ENCODE measurements at regions of chr1 and their contacts with region 1.

Region 1: DNA sequence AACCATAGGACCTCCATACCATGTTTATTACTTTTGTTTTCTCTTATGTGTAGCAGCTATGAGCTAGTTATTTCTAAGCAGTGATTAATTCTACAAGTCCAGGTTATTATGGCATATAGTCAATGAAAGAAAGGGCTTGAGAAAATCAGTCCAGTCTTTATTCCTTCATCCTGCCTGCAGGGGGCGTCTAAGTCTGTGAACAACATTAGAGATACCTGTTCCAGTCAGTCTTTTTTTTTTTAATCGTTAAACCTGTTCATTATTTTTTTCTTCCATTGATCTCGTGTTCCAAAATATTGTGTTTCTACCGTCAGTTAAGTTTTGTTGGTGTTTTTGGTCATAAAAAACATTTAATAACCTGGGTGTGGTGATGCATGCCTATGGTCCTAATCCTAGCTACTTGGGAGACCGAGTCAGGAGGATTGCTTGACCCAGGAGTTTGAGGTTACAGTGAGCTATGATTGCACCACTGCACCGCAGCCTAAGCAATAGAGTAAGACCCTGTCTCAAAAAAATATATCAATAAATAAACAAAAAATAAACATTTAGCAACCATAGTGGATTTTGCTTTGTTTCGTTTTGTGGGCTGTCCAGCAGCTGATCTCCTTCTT is 29.4 kb upstream of the CD2 start:
- DNase-seq: peak; percentile 89
- ATAC-seq: peak; percentile 83
- H3K4me3 Mint-ChIP-seq: no peak overlapping the region
- H3K27ac Mint-ChIP-seq: no peak overlapping the region
- H3K4me1 Mint-ChIP-seq: peaks cover 33% of the 10 kb centered on the region
- H3K27me3 Mint-ChIP-seq: no peaks in the 10 kb centered on the region

Region 2: GRCh38 chr1:116661633-116662032 is 63.2 kb before region 1 on chr1:
- CTCF ChIA-PET with region 1: no interaction called
- POLR2A ChIA-PET with region 1: no interaction called
- DNase-seq: no peak
- ATAC-seq: no peak
- H3K4me3 Mint-ChIP-seq: no peak overlapping the region
- H3K27ac Mint-ChIP-seq: no peak overlapping the region
- H3K4me1 Mint-ChIP-seq: peaks cover 20% of the 10 kb centered on the region
- H3K27me3 Mint-ChIP-seq: peaks cover 45% of the 10 kb centered on the region

Region 3: GRCh38 chr1:116697548-116698243 is 27.2 kb before region 1 on chr1:
- CTCF ChIA-PET with region 1: no interaction called
- POLR2A ChIA-PET with region 1: no interaction called
- DNase-seq: no peak
- ATAC-seq: no peak
- H3K4me3 Mint-ChIP-seq: no peak overlapping the region
- H3K27ac Mint-ChIP-seq: no peak overlapping the region
- H3K4me1 Mint-ChIP-seq: no peaks in the 10 kb centered on the region
- H3K27me3 Mint-ChIP-seq: no peaks in the 10 kb centered on the region

Region 4: GRCh38 chr1:116711263-116711840 is 13.5 kb before region 1 on chr1:
- CTCF ChIA-PET with region 1: interaction called, 15 read pairs
- POLR2A ChIA-PET with region 1: no interaction called
- DNase-seq: no peak
- ATAC-seq: no peak
- H3K4me3 Mint-ChIP-seq: no peak overlapping the region
- H3K27ac Mint-ChIP-seq: no peak overlapping the region
- H3K4me1 Mint-ChIP-seq: peaks cover 6% of the 10 kb centered on the region
- H3K27me3 Mint-ChIP-seq: peaks cover 4% of the 10 kb centered on the region

Region 5: GRCh38 chr1:116817582-116818064 is 92.8 kb after region 1 on chr1:
- CTCF ChIA-PET with region 1: interaction called, 15 read pairs
- POLR2A ChIA-PET with region 1: no interaction called
- DNase-seq: peak; percentile 83
- ATAC-seq: peak; percentile 75
- H3K4me3 Mint-ChIP-seq: peak overlapping the region; percentile 44
- H3K27ac Mint-ChIP-seq: peak overlapping the region; percentile 73
- H3K4me1 Mint-ChIP-seq: peaks cover 61% of the 10 kb centered on the region
- H3K27me3 Mint-ChIP-seq: no peaks in the 10 kb centered on the region

Region 6: DNA sequence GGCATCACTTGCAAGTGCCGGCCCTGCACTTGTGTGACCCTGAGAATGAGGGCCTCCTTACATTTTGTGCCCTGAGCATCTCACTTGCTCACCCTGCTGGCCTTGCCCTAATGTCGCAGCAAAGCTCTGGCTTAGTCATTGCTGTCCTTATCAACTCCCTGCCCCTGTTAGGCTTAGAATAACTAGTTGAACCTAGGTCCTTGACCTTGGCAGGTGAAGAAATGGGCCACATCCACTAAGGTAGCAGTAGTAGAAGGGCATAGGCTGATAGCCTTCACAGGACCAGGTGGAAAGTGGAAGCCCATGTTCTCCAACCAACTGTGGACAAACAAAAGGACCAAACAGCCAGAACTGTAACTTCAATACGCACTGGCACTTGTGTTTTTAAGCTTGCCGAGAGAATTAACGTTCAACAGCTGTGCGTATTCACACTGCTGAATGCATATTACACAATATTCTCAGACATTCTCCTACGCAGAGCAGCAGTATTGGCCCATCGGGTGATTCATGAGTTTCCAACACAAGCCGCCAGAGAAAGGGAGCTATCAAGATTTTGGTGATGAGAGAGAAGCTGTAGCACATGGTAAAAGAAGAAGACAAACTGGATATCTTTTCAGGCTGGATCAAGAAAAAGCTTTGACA is 157.1 kb after region 1 on chr1:
- CTCF ChIA-PET with region 1: interaction called, 73 read pairs
- POLR2A ChIA-PET with region 1: no interaction called
- DNase-seq: peak; percentile 65
- ATAC-seq: peak; percentile 35
- H3K4me3 Mint-ChIP-seq: no peak overlapping the region
- H3K27ac Mint-ChIP-seq: no peak overlapping the region
- H3K4me1 Mint-ChIP-seq: peaks cover 9% of the 10 kb centered on the region
- H3K27me3 Mint-ChIP-seq: no peaks in the 10 kb centered on the region

Measured in activated CD8-positive, alpha-beta T cell treated with anti-CD3 and anti-CD28 coated beads, Interleukin-2, amount 10 ng/mL, durations not matched to agents 7 days and 5 days (primary cell).